Ascending aorta (tissue), 2 donors: ENCODE measurements at regions of chr5 and their contacts with region 1.

Region 1: GRCh38 chr5:91419571-91420537 is 36.7 kb upstream of the ARRDC3 start:
- DNase-seq: peak in 1 of 2 donors; percentile 72
- H3K4me3 ChIP-seq: no peak overlapping the region
- H3K27ac ChIP-seq: no peak overlapping the region
- H3K4me1 ChIP-seq: no peaks in the 10 kb centered on the region
- H3K27me3 ChIP-seq: no peaks in the 10 kb centered on the region
- CTCF ChIP-seq: peak; percentile 64 to 72 (median 65)

Region 2: DNA sequence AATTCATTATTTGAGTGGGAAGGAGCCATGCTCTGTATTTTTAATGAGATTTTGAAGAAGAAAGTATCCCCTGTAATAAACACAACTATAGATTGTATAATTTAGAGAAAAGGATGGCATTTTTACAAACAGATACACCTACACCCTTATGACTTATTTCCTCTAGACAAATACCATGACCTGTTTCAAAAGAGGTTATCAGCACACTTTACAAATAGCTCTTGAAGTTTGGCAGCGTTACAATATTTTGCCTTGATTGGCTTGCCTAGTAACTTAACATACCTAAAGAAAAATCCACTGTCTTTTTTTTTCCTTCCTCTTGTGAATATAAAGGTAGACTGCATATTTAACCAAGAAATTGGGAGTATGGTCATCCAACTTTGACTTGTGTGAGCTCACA is 981.8 kb before region 1 on chr5:
- intact Hi-C with region 1: loop called (anchors 5 kb)
- DNase-seq: no peak
- H3K4me3 ChIP-seq: no peak overlapping the region
- H3K27ac ChIP-seq: no peak overlapping the region
- H3K4me1 ChIP-seq: no peaks in the 10 kb centered on the region
- H3K27me3 ChIP-seq: no peaks in the 10 kb centered on the region
- CTCF ChIP-seq: no peak

Region 3: GRCh38 chr5:90783460-90784333 is 636.2 kb before region 1 on chr5:
- intact Hi-C with region 1: loop called (anchors 10 kb)
- DNase-seq: peak in 1 of 2 donors; percentile 71
- H3K4me3 ChIP-seq: no peak overlapping the region
- H3K27ac ChIP-seq: no peak overlapping the region
- H3K4me1 ChIP-seq: no peaks in the 10 kb centered on the region
- H3K27me3 ChIP-seq: no peaks in the 10 kb centered on the region
- CTCF ChIP-seq: peak; percentile 47 to 81 (median 80)

Region 4: GRCh38 chr5:90866333-90866732 is 553.5 kb before region 1 on chr5:
- intact Hi-C with region 1: loop called (anchors 1 kb)
- DNase-seq: no peak
- H3K4me3 ChIP-seq: peak overlapping the region in 1 of 2 donors; percentile 42
- H3K27ac ChIP-seq: no peak overlapping the region
- H3K4me1 ChIP-seq: no peaks in the 10 kb centered on the region
- H3K27me3 ChIP-seq: no peaks in the 10 kb centered on the region
- CTCF ChIP-seq: peak; percentile 34 to 56 (median 50)

Region 5: DNA sequence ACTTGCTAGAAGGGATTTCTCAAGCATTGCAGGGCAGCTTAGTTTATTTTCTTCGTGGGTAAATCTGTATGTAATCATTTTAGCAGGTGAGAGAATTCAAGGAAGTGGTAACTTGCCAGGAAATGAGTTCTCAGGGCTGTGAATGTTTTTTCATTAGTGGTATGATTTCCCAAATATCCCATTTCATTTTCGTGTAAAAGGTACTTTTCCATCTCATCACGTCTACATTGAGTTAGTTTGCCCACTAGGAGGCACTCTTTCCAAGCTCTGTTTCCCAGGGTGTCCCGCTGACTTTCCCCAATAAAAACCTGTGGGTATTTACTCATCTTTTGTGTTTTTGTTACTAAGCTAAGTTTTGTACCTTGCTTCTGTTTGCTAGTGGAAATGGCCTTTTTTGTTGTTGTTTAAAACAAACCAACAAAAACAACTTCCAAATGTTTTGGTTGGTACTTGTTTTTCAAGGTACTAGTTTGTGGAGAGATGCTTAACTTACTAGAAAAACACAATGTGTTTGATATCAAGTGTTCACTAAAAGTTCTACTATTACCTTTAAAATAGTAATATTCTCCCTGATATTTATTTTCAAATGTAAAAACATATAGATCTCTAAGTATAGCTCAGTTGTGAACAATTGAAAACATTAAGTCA is 487.7 kb before region 1 on chr5:
- intact Hi-C with region 1: loop called (anchors 10 kb)
- DNase-seq: peak in 1 of 2 donors; percentile 69
- H3K4me3 ChIP-seq: no peak overlapping the region
- H3K27ac ChIP-seq: no peak overlapping the region
- H3K4me1 ChIP-seq: peaks cover 0 to 3% of the 10 kb centered on the region in 2 donors
- H3K27me3 ChIP-seq: no peaks in the 10 kb centered on the region
- CTCF ChIP-seq: peak; percentile 52 to 79 (median 57)

Region 6: DNA sequence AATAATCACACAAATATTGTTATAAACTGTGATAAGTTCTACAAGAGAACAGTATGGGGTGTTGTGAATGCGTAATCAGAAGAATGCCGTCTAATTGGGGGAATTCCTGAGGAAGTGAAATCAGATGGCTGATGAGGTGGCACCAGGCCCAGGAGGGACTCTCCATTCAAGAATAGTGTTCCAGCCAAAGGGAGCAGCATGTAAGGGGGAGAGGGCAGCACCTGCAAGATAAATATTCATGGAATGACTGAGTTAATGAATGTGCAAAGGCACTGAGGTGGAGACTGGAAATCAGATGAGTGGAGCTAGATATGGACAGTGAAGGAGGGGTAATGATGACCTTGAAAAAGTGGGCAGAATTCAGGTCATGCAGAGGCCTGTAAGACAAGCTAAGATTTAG is 287.3 kb before region 1 on chr5:
- intact Hi-C with region 1: no loop called
- DNase-seq: no peak
- H3K4me3 ChIP-seq: no peak overlapping the region
- H3K27ac ChIP-seq: no peak overlapping the region
- H3K4me1 ChIP-seq: peaks cover 3 to 15% of the 10 kb centered on the region in 2 donors
- H3K27me3 ChIP-seq: no peaks in the 10 kb centered on the region
- CTCF ChIP-seq: no peak

Region 7: DNA sequence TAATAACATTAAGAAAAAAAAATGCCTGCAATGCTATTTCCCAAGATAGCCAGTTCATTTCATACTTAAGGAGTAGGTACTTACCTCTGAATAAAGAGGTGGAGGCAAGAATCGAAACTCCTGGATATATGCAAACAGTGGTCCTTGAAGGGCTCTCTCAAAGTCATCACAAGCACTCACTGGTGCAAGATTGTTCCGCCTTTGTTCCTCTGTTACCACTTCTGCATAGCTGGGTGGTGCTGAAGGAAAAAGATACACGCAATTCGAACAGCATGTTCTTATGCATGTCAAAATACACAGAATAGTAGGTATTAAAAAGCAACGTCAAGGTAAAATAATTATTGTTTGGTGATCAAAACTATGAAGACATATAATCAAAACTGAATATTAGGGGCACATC is 46.3 kb before region 1 on chr5:
- intact Hi-C with region 1: no loop called
- DNase-seq: no peak
- H3K4me3 ChIP-seq: no peak overlapping the region
- H3K27ac ChIP-seq: no peak overlapping the region
- H3K4me1 ChIP-seq: peaks cover 0 to 17% of the 10 kb centered on the region in 2 donors
- H3K27me3 ChIP-seq: no peaks in the 10 kb centered on the region
- CTCF ChIP-seq: no peak